H1 (cell line): ENCODE measurements at regions of chr5 and their contacts with region 1.

Region 1: DNA sequence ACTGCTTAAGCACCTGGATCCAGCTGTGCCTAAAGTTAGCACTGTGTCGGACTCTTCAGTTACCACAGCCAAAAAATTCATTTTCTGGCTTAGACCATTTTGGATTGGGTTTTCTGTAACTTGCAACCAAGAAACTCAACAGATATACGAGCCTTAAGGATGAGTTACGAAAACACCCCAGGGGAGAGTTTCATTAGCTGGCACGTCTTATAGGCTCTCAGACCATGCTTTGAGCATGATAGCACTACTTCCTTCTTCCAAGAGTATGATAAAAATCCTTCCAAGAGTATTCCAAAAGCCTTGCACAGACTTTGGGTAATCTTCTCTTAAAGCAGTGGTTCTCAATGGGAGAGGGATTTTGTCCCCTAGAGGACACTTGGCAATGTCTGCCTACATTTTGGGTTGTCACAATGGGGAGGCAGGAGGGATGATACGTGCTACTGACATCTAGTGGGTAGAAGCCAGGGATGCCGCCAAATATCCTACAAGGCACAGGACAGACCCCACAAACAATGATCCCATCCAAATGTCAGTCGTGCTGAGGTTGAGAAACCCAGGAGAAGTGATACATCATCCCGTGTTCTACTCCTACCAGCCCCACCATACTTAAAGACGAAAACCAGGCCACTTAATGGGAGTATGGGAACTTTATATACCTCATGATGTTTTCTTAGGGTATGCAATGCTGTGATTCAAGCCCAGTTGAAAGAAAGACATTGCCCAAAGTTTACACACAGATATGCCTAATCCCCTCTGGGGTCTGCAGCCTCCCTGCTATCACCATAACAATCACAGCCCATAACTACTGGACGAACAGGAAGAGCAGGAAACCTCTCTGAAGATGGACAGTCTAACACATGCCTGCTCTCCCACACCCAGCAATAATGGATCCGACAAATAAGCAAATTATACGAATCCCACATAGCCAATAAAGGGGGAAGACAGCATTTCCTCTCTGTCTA is 65.0 kb downstream of the SMIM23 start:
- DNase-seq: no peak
- H3K4me3 ChIP-seq: no peak overlapping the region
- H3K27ac ChIP-seq: no peak overlapping the region
- H3K4me1 ChIP-seq: peaks cover 0 to 6% (median 1%) of the 10 kb centered on the region in 4 experiments; a peak in 5 of 7 replicates
- H3K27me3 ChIP-seq: no peaks in the 10 kb centered on the region
- CTCF ChIP-seq: peak; percentile 75 to 97 (median 93)
- EP300 ChIP-seq: no peak
- POLR2A ChIP-seq: no peak
- RAD21 ChIP-seq: peak; percentile 83 to 89

Region 2: DNA sequence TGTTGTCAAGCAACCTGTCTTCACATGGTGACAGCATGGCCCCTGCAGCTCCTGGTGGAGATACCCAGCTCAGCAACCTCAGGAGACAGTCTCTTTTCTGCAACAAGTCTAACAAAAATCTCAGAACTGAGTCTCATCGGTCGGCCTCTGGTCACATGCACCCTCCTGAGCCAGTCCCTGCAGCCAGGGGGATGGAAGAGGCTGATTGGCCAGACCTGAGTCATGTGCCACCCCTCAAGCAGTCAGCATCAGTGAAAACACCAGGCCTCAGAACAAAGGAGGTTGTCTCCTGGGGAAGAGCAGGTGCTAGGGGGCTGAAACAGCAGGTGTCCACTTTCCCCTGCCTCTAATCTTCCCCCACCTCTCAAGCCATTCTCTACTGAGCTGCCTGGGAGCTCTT is 10.5 kb before region 1 on chr5:
- CTCF ChIA-PET with region 1: interaction called, 81 read pairs
- POLR2A ChIA-PET with region 1: interaction called, 5 read pairs
- DNase-seq: no peak
- H3K4me3 ChIP-seq: no peak overlapping the region
- H3K27ac ChIP-seq: no peak overlapping the region
- H3K4me1 ChIP-seq: no peaks in the 10 kb centered on the region
- H3K27me3 ChIP-seq: no peaks in the 10 kb centered on the region
- CTCF ChIP-seq: no peak
- EP300 ChIP-seq: no peak
- POLR2A ChIP-seq: no peak
- RAD21 ChIP-seq: no peak